ENCODE measurements at regions of chr17 and their contacts with region 1.

Region 1: GRCh38 chr17:80931936-80932265 is 59.7 kb upstream of the CHMP6 start:
- DNase-seq: no peak
- ATAC-seq: no peak
- H3K4me3 Mint-ChIP-seq: no peak overlapping the region
- H3K27ac Mint-ChIP-seq: no peak overlapping the region
- H3K4me1 Mint-ChIP-seq: peaks cover 13% of the 10 kb centered on the region
- H3K27me3 Mint-ChIP-seq: no peaks in the 10 kb centered on the region
- CTCF ChIP-seq: no peak

Region 2: GRCh38 chr17:80944326-80944725 is 12.4 kb after region 1 on chr17:
- CTCF ChIA-PET with region 1: interaction called, 4 read pairs
- POLR2A ChIA-PET with region 1: interaction called, 14 read pairs
- intact Hi-C with region 1: no loop called
- DNase-seq: no peak
- ATAC-seq: no peak
- H3K4me3 Mint-ChIP-seq: no peak overlapping the region
- H3K27ac Mint-ChIP-seq: no peak overlapping the region
- H3K4me1 Mint-ChIP-seq: peaks cover 13% of the 10 kb centered on the region
- H3K27me3 Mint-ChIP-seq: no peaks in the 10 kb centered on the region
- CTCF ChIP-seq: no peak

Region 3: DNA sequence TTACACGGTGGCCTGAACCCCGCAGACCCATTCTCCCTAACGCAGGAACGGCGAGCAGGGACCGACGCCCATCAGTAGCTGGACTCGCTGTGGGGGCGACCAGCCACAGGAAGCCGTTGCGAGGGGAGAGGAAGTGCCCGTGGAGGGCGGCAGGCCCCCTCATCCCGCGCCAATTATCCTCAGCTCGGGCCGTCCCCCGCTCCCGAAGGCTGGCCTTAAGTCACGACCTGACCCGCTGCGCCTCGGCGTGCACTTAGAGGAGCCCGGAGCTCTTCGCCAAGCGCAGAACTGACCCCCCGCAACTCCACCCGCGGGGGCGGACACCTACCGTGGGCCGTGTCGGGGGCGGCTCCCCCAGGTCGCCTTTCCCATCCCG is 751.3 kb after region 1 on chr17:
- CTCF ChIA-PET with region 1: no interaction called
- POLR2A ChIA-PET with region 1: no interaction called
- intact Hi-C with region 1: no loop called
- DNase-seq: no peak
- ATAC-seq: peak; percentile 13
- H3K4me3 Mint-ChIP-seq: peak overlapping the region; percentile 95
- H3K27ac Mint-ChIP-seq: peak overlapping the region; percentile 53
- H3K4me1 Mint-ChIP-seq: peaks cover 34% of the 10 kb centered on the region
- H3K27me3 Mint-ChIP-seq: no peaks in the 10 kb centered on the region
- CTCF ChIP-seq: no peak